ENCODE measurements at regions of chr12 and their contacts with region 1.

Region 1: DNA sequence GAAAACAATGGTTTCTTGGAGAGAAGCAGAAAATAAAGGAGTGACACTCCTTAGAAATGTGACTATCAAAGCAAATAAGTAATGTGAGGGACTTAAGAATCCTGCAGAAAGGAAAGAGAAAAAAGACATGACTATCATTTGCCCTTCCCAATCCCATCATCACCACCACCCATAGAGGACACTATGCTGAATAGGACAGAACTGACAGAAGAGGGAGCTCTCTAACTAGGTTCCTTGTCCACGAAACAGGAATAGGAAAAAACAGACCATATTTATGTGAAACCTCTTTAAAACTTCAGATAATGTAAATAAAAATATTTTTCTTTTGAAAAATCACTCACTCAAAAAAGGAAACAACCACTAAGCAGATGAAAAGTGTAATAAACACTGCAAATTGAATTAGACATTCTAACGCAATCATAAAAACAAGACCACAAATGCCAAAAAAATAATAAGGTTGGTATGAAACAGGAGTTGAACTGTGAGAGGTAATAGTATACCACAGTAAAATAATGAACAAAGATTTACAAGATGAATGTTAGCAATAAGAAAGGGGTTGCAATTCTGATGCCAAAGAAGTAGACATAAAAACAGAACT is 24.1 kb downstream of the KLRD1 start:
- DNase-seq: peak; percentile 78
- H3K4me3 ChIP-seq: no peak overlapping the region
- H3K27ac ChIP-seq: no peak overlapping the region
- H3K4me1 ChIP-seq: peaks cover 10% of the 10 kb centered on the region
- CTCF ChIP-seq: peak; percentile 96

Region 2: GRCh38 chr12:10033783-10034545 is 297.8 kb before region 1 on chr12:
- CTCF ChIA-PET with region 1: no interaction called
- POLR2A ChIA-PET with region 1: no interaction called
- intact Hi-C with region 1: loop called (anchors 10 kb)
- DNase-seq: peak; percentile 9
- H3K4me3 ChIP-seq: no peak overlapping the region
- H3K27ac ChIP-seq: no peak overlapping the region
- H3K4me1 ChIP-seq: no peaks in the 10 kb centered on the region
- CTCF ChIP-seq: peak; percentile 81

Region 3: DNA sequence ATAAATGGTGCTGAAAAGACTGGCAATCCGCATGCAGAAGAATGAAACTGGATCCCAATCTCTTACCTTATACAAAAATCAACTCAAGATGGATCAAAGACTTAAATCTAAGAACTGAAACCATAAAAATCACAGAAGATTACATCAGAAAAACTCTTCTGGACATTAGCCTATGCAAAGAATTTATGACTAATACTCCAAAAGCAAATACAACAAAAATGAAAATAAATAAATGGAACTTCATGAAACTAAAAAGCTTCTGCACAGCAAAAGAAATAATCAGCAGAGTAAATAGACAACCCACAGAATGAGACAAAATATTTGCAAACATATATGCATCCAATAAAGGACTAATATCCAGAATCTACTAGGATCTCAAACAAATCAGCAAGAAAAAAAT is 218.7 kb before region 1 on chr12:
- CTCF ChIA-PET with region 1: no interaction called
- POLR2A ChIA-PET with region 1: no interaction called
- intact Hi-C with region 1: no loop called
- DNase-seq: no peak
- H3K4me3 ChIP-seq: no peak overlapping the region
- H3K27ac ChIP-seq: no peak overlapping the region
- H3K4me1 ChIP-seq: no peaks in the 10 kb centered on the region
- CTCF ChIP-seq: no peak

Region 4: GRCh38 chr12:10160659-10161385 is 170.9 kb before region 1 on chr12:
- CTCF ChIA-PET with region 1: no interaction called
- POLR2A ChIA-PET with region 1: no interaction called
- intact Hi-C with region 1: no loop called
- DNase-seq: no peak
- H3K4me3 ChIP-seq: no peak overlapping the region
- H3K27ac ChIP-seq: no peak overlapping the region
- H3K4me1 ChIP-seq: peaks cover 40% of the 10 kb centered on the region
- CTCF ChIP-seq: no peak

Region 5: DNA sequence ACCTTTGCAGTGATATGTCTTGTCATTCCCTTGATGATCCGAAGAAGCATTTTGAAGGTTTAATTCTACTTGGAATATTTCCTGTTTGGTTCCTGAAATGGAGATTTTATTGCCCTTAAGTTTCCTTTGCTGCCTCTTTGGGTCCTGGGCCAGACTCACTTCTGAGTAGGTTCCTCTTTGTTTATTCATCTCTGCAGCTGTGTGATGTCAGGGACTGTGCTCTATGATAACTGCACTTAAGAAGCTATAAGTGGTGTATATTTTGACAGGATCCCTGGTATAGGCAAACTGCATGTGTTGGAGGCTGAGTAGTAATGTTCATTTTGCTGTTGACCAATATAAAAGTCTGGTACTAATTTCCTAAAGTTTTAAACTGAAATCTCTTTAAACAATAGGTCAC is 77.6 kb after region 1 on chr12 and contains the start of gene KLRC4:
- CTCF ChIA-PET with region 1: no interaction called
- POLR2A ChIA-PET with region 1: no interaction called
- intact Hi-C with region 1: loop called (anchors 5 kb)
- DNase-seq: peak; percentile 92
- H3K4me3 ChIP-seq: peak within 1 kb of the TSS; percentile 73
- H3K27ac ChIP-seq: peak within 1 kb of the TSS; percentile 86
- H3K4me1 ChIP-seq: peaks cover 47% of the 10 kb centered on the region
- CTCF ChIP-seq: no peak
- total RNA-seq, gene KLRC4: 8.6 and 9.3 TPM in 2 replicates

Region 6: GRCh38 chr12:10501031-10501430 is 169.3 kb after region 1 on chr12:
- CTCF ChIA-PET with region 1: no interaction called
- POLR2A ChIA-PET with region 1: no interaction called
- intact Hi-C with region 1: loop called (anchors 1 kb)
- DNase-seq: peak; percentile 33
- H3K4me3 ChIP-seq: no peak overlapping the region
- H3K27ac ChIP-seq: no peak overlapping the region
- H3K4me1 ChIP-seq: peaks cover 19% of the 10 kb centered on the region
- CTCF ChIP-seq: peak; percentile 72

Region 7: DNA sequence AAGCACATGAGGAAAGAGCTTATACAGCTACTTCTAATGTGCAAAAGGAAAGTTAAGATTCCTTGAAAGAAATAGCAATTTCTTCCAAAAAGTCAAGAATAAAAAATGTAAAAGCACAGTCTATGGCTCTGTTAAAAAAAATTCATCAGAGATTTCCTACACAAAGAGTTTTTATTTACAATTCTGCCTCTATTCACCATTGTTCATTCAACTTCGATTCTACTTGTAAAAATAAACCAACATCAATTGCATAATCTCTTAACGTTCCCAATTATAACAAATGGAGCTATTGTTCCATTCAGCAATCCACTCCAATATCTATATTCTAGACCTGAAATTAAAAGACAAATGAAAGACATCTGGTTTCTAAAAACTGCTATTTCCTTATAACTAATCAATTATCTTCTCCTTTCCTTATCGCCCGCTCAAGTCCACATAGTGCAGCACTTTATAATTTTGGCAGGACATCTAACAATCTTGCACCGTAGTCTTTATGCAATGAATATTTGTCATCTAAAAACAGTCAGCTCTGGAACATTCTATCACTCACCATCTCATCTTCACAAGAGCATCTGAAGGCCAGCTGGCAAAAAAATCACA is 180.1 kb after region 1 on chr12:
- CTCF ChIA-PET with region 1: no interaction called
- POLR2A ChIA-PET with region 1: no interaction called
- intact Hi-C with region 1: no loop called
- DNase-seq: no peak
- H3K4me3 ChIP-seq: no peak overlapping the region
- H3K27ac ChIP-seq: no peak overlapping the region
- H3K4me1 ChIP-seq: no peaks in the 10 kb centered on the region
- CTCF ChIP-seq: no peak

Region 8: DNA sequence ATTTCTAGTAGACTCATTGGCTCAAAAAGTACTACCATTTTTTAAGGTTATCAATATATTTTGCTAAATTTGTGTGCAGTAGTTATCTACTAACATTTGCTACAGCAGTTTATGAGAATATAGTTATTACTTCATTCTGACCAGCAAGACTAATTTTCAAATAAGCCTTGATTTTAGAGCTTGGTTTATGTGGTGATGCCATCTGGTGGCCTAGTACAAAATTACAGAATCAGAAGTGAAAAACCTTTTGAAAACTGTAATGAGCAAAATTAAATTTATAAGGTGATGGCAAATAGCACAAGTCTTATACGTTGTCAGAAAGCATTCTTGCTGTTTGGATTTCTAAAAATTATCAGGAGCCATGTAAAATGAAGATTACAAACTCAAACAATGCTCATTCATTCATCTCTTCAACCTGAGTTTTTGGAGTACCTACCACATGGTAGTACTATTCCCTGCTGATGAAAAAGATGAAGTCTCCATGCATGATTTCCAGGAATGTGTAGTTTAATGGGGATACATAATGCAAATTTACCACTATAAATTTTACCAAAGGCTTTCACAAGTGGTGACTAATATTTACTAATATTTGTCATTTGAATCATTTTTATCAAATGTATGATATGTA is 230.7 kb after region 1 on chr12:
- CTCF ChIA-PET with region 1: interaction called, 3 read pairs
- POLR2A ChIA-PET with region 1: interaction called, 3 read pairs
- intact Hi-C with region 1: loop called (anchors 1 kb)
- DNase-seq: peak; percentile 76
- H3K4me3 ChIP-seq: no peak overlapping the region
- H3K27ac ChIP-seq: peak overlapping the region; percentile 98
- H3K4me1 ChIP-seq: peaks cover 50% of the 10 kb centered on the region
- CTCF ChIP-seq: peak; percentile 98

Region 9: DNA sequence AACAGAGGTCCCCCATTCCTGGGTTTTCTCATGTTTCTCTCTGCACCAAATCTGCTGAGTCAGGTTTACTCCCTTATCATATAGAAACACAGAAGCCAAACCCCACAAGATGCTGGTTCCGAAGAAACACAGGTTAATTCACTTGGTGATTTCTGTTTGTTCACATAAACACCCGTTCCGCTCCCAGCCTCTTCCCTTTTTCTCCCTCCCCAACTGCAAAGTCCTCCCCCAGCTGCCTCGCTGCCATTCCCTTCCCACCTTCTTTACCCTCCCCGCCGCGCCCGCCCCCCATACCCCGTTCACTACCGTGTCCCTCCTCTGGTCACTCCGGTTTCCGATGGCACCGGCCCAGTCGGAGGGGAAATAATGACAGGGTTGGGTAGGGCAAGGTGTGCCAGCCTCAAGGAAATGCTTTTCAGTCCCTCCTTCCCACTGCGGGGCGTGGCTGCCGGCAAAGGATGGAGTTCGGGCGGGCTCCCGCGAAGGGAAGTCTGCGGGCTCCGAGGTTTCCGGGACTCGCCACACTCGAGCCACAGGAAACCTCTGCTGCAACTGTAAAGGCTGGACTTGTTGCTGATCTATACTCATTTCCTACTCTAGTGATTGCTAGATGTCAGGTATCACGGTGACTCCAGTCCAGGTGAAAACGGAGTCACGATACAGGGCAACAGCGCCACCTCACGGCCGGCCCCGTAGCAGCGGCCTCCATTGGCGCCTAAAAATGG is 342.1 kb after region 1 on chr12 and contains the start of gene STYK1:
- CTCF ChIA-PET with region 1: no interaction called
- POLR2A ChIA-PET with region 1: no interaction called
- intact Hi-C with region 1: loop called (anchors 1 kb)
- DNase-seq: peak; percentile 67
- H3K4me3 ChIP-seq: peak within 1 kb of the TSS; percentile 65
- H3K27ac ChIP-seq: no peak within 1 kb of the TSS
- H3K4me1 ChIP-seq: peaks cover 21% of the 10 kb centered on the region
- CTCF ChIP-seq: peak; percentile 92
- total RNA-seq, gene STYK1: not detected in 2 replicates

Region 10: GRCh38 chr12:10749700-10750384 is 418.1 kb after region 1 on chr12:
- CTCF ChIA-PET with region 1: no interaction called
- POLR2A ChIA-PET with region 1: no interaction called
- intact Hi-C with region 1: loop called (anchors 2 kb)
- DNase-seq: peak; percentile 87
- H3K4me3 ChIP-seq: no peak overlapping the region
- H3K27ac ChIP-seq: no peak overlapping the region
- H3K4me1 ChIP-seq: peaks cover 5% of the 10 kb centered on the region
- CTCF ChIP-seq: peak; percentile 100